H1 (cell line): ENCODE measurements at regions of chr5 and their contacts with region 1.

Region 1: GRCh38 chr5:33905381-33905780 is 13.6 kb upstream of the ADAMTS12 start:
- DNase-seq: no peak
- H3K4me3 ChIP-seq: no peak overlapping the region
- H3K27ac ChIP-seq: no peak overlapping the region
- H3K4me1 ChIP-seq: no peaks in the 10 kb centered on the region
- H3K27me3 ChIP-seq: no peaks in the 10 kb centered on the region
- CTCF ChIP-seq: no peak
- EP300 ChIP-seq: no peak
- POLR2A ChIP-seq: no peak
- RAD21 ChIP-seq: no peak

Region 2: DNA sequence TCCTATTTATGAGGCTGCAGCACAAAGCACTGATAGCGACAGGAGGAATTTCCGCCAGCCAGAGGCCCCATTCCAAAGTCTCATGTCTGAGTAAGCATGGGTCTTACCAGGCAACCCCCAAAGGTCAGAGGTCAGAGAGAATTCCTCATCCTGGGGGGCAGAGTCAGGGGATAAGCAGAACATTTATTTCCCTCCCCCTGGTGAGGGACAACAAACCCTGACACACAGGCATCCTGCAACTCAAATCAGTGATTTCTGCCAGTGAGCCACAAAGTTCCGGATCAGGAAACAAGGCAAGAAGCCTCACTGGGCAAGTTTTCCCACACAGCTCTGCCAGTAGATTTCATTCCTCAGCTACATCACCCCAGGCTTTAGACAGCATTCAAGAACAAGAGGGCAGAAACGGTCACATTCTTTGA is 50.6 kb before region 1 on chr5:
- CTCF ChIA-PET with region 1: no interaction called
- POLR2A ChIA-PET with region 1: no interaction called
- DNase-seq: no peak
- H3K4me3 ChIP-seq: peak overlapping the region in 1 of 4 experiments; percentile 2; a peak in 1 of 8 replicates
- H3K27ac ChIP-seq: no peak overlapping the region
- H3K4me1 ChIP-seq: peaks cover 7 to 22% (median 11%) of the 10 kb centered on the region in 4 experiments
- H3K27me3 ChIP-seq: no peaks in the 10 kb centered on the region
- CTCF ChIP-seq: no peak
- EP300 ChIP-seq: no peak
- POLR2A ChIP-seq: no peak
- RAD21 ChIP-seq: no peak

Region 3: GRCh38 chr5:33921002-33921401 is 15.6 kb after region 1 on chr5:
- CTCF ChIA-PET with region 1: interaction called, 12 read pairs
- POLR2A ChIA-PET with region 1: no interaction called
- DNase-seq: no peak
- H3K4me3 ChIP-seq: no peak overlapping the region
- H3K27ac ChIP-seq: no peak overlapping the region
- H3K4me1 ChIP-seq: no peaks in the 10 kb centered on the region
- H3K27me3 ChIP-seq: no peaks in the 10 kb centered on the region
- CTCF ChIP-seq: no peak
- EP300 ChIP-seq: no peak
- POLR2A ChIP-seq: no peak
- RAD21 ChIP-seq: no peak

Region 4: GRCh38 chr5:33944543-33945132 is 39.3 kb after region 1 on chr5:
- CTCF ChIA-PET with region 1: no interaction called
- POLR2A ChIA-PET with region 1: no interaction called
- DNase-seq: no peak
- H3K4me3 ChIP-seq: no peak overlapping the region
- H3K27ac ChIP-seq: no peak overlapping the region
- H3K4me1 ChIP-seq: peaks cover 0 to 2% (median under 1%) of the 10 kb centered on the region in 4 experiments; a peak in 1 of 7 replicates
- H3K27me3 ChIP-seq: no peaks in the 10 kb centered on the region
- CTCF ChIP-seq: no peak
- EP300 ChIP-seq: no peak
- POLR2A ChIP-seq: no peak
- RAD21 ChIP-seq: no peak